OCI-LY7 (cell line): ENCODE measurements at regions of chr3 and their contacts with region 1.

Region 1: DNA sequence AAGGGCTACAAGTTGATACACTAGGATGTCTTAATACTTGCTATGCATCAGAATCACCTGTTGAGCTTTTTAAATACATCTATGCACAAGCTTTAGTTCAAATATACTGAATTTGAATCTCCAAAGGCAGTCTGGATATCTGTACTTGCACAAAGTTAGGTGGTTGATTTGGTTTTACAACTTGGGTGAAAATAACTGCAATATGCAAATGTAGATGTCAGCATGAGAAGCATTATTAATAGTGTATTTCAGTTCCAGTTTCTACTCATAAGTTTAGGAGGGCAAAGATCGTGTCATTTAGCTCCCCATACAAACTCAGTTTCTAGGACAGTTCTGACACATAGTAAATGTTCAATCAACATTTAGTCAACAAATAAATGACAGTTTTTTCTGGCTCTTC is 25.6 kb downstream of the IQCB1 start:
- DNase-seq: peak; percentile 77
- H3K4me3 ChIP-seq: peak overlapping the region; percentile 50
- H3K27ac ChIP-seq: peak overlapping the region; percentile 92
- H3K4me1 ChIP-seq: peaks cover 53% of the 10 kb centered on the region
- CTCF ChIP-seq: no peak

Region 2: DNA sequence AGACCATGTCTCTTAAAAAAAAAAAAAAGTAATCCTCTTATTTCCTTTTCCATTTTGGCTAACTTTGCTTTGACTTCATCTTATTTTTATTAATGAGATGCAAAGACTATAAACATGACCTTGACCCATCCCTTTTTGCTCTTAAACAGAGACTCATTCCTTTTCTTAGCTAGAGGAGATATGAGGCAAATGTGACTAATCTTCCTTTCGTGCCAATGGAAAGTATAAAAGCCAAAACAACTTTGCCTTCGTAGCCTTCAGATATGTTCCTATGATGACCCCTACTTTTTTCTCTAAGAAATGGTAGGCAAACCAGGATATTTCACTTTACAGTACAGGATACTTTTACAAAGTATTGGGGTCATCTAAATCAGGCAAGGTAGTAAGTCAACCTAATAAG is 22.8 kb before region 1 on chr3:
- CTCF ChIA-PET with region 1: no interaction called
- POLR2A ChIA-PET with region 1: interaction called, 178 read pairs
- intact Hi-C with region 1: no loop called
- DNase-seq: no peak
- H3K4me3 ChIP-seq: no peak overlapping the region
- H3K27ac ChIP-seq: no peak overlapping the region
- H3K4me1 ChIP-seq: no peaks in the 10 kb centered on the region
- CTCF ChIP-seq: no peak

Region 3: DNA sequence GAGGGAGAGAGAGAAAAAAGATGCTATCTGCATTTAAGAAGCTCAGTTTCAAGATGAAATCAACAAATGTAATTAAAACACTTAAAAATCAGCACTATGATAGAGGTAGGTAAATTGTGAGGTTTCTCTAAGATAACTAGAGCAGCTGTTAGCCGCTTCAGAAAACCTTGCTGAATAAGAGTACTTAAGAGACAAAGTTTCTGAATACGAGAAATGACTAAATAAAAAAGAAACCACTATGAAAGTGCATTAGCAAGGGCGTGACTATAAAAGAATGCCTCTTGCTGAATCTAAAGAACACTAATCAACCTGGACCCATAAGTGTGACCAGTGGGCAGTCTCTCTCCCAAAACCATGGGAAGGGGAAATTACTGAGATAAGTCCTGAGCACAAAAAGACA is 16.2 kb before region 1 on chr3:
- CTCF ChIA-PET with region 1: interaction called, 4 read pairs
- POLR2A ChIA-PET with region 1: interaction called, 178 read pairs
- intact Hi-C with region 1: loop called (anchors 1 kb)
- DNase-seq: peak; percentile 21
- H3K4me3 ChIP-seq: peak overlapping the region; percentile 49
- H3K27ac ChIP-seq: peak overlapping the region; percentile 91
- H3K4me1 ChIP-seq: peaks cover 55% of the 10 kb centered on the region
- CTCF ChIP-seq: no peak

Region 4: GRCh38 chr3:122014741-122015140 is 205.5 kb after region 1 on chr3:
- CTCF ChIA-PET with region 1: no interaction called
- POLR2A ChIA-PET with region 1: no interaction called
- intact Hi-C with region 1: no loop called
- DNase-seq: no peak
- H3K4me3 ChIP-seq: peak overlapping the region; percentile 9
- H3K27ac ChIP-seq: no peak overlapping the region
- H3K4me1 ChIP-seq: peaks cover 61% of the 10 kb centered on the region
- CTCF ChIP-seq: no peak